ENCODE measurements at regions of chr5 and their contacts with region 1.

Region 1: DNA sequence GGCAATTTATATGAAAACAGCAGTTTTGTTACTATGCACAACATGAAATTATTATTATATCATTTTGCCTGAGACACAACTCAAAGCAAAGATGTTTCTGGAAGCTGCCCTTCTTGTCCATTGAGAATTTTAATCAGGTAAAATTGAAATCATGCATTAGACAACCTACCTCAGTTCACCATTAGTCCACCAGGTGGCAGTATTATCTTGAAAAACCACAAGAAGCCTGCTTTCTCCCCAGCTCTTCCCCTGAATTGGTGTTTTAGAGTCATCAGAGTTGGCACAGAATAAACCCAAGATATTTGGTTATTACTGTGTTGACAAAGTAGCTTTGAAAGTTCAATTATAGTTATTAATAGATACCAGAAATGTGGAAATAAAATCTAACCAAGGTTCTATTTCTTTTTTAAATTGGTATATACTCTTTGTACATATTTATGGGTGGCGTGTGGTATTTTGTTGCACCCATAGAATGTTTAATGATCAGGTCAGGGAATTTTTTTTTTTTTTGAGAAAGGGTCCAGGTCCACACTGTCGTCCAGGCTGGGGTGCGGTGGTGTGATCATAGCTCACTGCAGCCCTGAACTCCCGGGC is 25.7 kb downstream of the UTP15 start:
- DNase-seq: peak in 1 of 2 donors; percentile 35
- ATAC-seq: peak; percentile 70 to 83
- H3K4me3 ChIP-seq: no peak overlapping the region
- H3K27ac ChIP-seq: no peak overlapping the region
- H3K4me1 ChIP-seq: no peaks in the 10 kb centered on the region
- H3K27me3 ChIP-seq: no peaks in the 10 kb centered on the region
- CTCF ChIP-seq: peak; percentile 72 to 91 (median 79)
- POLR2A ChIP-seq: no peak

Region 2: GRCh38 chr5:73693481-73694061 is 102.4 kb after region 1 on chr5:
- in situ Hi-C with region 1: no loop called
- intact Hi-C with region 1: loop called (anchors 2 kb)
- DNase-seq: no peak
- ATAC-seq: no peak
- H3K4me3 ChIP-seq: no peak overlapping the region
- H3K27ac ChIP-seq: no peak overlapping the region
- H3K4me1 ChIP-seq: no peaks in the 10 kb centered on the region
- H3K27me3 ChIP-seq: no peaks in the 10 kb centered on the region
- CTCF ChIP-seq: peak in 3 of 5 experiments; percentile 13 to 24 (median 17)
- POLR2A ChIP-seq: no peak

Region 3: DNA sequence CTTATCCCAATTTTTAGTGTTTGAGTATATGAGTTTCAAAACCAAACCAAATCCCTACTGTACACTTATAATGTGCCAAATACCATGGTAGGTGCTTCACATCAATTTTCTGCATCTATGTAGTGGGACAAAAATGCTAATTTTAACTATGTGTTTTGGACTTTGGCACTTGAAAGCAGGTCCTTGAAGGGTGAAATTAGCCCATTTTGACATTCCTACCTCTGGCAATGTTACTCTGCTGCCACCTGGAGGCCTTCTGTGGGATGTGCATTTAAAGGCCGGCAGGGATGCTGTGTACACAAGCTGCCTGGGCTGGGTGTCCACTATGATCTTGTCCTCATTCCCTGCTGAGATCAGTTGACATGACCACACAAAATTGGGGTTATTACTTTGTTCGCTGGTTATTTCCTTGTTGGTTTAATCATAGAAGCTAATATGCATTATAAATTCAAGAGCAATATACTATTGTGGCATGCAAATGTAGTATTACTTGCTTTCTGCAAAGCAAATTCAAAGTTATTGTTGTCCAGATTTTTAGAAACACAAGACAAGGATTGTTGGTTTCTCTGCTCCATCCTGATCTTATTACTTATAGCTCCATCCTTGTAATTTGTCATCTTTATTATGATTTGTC is 201.6 kb after region 1 on chr5:
- in situ Hi-C with region 1: loop called (anchors 5 kb)
- intact Hi-C with region 1: loop called (anchors 1 kb)
- DNase-seq: peak; percentile 12 to 47
- ATAC-seq: peak; percentile 71 to 75
- H3K4me3 ChIP-seq: no peak overlapping the region
- H3K27ac ChIP-seq: no peak overlapping the region
- H3K4me1 ChIP-seq: peaks cover 0 to 5% of the 10 kb centered on the region in 2 donors
- H3K27me3 ChIP-seq: no peaks in the 10 kb centered on the region
- CTCF ChIP-seq: peak; percentile 79 to 97 (median 93)
- POLR2A ChIP-seq: no peak